ENCODE measurements at regions of chr15 and their contacts with region 1.

Region 1: DNA sequence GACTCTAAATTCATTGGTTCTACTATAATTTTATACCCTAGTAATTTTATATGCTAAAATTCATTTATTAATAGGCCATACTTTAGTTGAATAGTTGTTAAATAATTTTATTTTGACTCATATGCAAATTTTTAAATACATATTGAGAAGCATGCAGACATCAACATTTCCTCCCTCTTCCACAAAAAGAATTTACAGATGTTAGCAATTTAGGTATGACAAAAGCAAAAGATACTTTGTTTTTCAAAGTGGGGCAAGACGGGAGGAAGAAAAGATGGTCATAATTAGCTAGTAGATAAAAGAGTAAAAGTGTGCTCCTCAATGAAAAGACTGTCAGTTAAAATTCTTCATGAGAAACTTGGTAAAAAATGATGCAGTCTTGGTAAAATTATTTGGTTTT is 148.9 kb upstream of the TSPAN3 start:
- DNase-seq: no peak
- H3K4me3 Mint-ChIP-seq: no peak overlapping the region
- H3K27ac Mint-ChIP-seq: no peak overlapping the region
- H3K4me1 Mint-ChIP-seq: peaks cover 9% of the 10 kb centered on the region
- H3K27me3 Mint-ChIP-seq: no peaks in the 10 kb centered on the region

Region 2: GRCh38 chr15:77208241-77208640 is 11.6 kb before region 1 on chr15:
- CTCF ChIA-PET with region 1: no interaction called
- POLR2A ChIA-PET with region 1: no interaction called
- DNase-seq: no peak
- H3K4me3 Mint-ChIP-seq: no peak overlapping the region
- H3K27ac Mint-ChIP-seq: no peak overlapping the region
- H3K4me1 Mint-ChIP-seq: no peaks in the 10 kb centered on the region
- H3K27me3 Mint-ChIP-seq: no peaks in the 10 kb centered on the region

Region 3: DNA sequence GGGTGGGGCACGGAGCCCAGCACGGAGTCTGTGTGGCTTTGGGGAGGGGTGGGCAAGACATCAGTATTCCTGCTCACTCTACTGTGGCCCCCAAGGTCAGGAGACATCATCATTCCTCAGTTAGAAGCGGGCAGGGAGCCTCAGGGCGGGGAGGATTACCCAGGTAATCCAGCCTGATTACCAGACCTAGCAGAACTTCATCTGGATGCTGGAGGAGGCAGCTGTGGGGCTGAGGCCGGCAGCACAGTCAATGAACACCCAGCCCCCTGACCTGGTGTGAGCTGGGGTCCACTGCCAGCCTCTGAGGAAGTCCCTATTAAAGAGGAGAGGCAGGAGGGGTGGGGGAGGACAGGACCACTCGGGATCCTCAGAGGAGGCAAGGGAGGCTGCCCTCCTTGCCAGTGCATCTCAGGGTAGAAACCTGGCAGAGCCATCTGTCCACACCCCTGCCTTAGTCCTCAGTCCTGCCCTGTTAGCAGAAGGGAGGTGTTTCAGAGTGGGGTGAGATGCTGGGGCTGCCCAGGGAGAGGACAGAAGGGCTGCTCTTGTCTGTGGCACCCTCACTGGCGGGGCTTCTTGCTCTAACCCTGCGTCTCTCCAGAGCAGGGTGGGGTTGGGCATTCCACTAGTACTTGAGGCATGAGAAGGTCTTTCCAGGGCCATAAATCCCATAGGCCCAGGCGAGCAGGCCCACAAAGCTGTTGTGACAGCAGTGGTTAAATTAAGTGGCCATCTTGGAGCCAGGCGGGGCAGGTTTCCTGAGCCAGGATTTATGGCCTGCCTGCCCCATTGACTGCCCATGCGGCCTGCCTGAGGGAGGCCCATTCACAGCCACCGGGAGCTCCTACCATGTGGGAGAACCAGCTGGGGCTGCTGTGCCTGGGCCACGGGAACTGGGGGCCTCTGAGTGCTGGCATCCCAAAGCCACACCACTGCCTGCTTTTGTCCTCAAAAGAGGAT is 330.7 kb after region 1 on chr15:
- CTCF ChIA-PET with region 1: no interaction called
- POLR2A ChIA-PET with region 1: interaction called, 12 read pairs
- DNase-seq: no peak
- H3K4me3 Mint-ChIP-seq: no peak overlapping the region
- H3K27ac Mint-ChIP-seq: no peak overlapping the region
- H3K4me1 Mint-ChIP-seq: no peaks in the 10 kb centered on the region
- H3K27me3 Mint-ChIP-seq: peaks cover under 1% of the 10 kb centered on the region